Natural killer cell (primary cell): ENCODE measurements at regions of chr6 and their contacts with region 1.

Region 1: DNA sequence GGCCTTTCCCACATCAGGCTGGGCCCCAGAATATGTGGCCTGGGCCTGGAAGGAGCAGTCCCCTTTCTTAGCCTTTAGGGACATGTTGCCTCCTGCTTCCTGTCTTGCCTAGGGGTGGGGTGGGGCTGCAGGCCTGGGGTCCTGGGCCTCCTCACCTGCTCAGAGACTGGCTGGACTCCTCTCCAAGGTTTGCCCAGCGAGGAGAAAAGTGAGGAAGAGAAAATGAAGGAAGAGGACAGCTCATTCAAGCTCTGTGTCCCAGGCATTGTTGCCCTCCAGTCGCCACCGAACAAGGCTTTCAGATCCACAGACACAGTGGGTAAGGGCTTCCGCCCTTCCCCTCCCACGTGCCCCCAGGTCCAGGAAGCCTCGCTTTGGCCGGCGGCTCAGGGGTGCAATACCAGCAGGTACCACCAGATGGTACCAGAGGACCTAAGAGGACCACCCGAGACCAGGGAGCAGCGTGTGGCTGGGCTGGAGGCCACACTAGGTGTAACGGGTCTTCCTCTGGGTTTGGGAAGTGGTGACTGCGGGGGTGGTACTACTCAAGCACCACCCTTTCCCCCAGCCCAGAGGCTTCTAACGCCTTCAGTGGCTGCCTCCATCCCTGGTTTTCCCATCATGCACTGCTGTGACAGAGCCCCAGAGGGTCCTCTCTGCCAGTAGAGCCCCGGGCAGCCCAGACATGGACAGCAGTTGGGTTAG is 5.5 kb upstream of the BAK1 start:
- DNase-seq: peak; percentile 90 to 93
- ATAC-seq: peak; percentile 93 to 98 (median 97)
- H3K4me3 ChIP-seq: no peak overlapping the region
- H3K4me3 Mint-ChIP-seq: no peak overlapping the region
- H3K27ac ChIP-seq: peak overlapping the region; percentile 20
- H3K27ac Mint-ChIP-seq: peak overlapping the region; percentile 54 to 70
- H3K4me1 ChIP-seq: peaks cover 18% of the 10 kb centered on the region
- H3K4me1 Mint-ChIP-seq: peaks cover 0 to 12% of the 10 kb centered on the region in 2 donors
- H3K27me3 ChIP-seq: no peaks in the 10 kb centered on the region
- H3K27me3 Mint-ChIP-seq: no peaks in the 10 kb centered on the region
- CTCF ChIP-seq: peak; percentile 100

Region 2: DNA sequence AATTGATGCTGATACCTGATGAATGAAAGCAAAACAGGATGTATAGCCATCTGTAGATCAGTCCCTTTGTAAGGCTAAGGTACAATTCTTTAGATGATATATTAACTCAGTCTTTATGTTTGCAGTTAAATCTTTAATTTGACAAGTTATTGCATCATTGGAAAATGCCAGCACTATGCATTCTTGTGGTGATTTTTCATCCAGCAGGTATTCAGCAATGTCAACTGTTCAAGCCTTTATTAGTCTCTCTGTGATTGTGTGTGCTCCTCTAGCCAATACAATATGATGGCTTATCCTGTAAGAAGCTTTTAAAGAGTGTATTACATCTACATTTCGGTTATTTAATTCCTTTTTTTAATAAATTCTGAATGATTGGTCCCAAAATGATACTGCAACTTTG is 679.0 kb before region 1 on chr6:
- intact Hi-C with region 1: no loop called
- DNase-seq: no peak
- ATAC-seq: no peak
- H3K4me3 ChIP-seq: no peak overlapping the region
- H3K4me3 Mint-ChIP-seq: no peak overlapping the region
- H3K27ac ChIP-seq: no peak overlapping the region
- H3K27ac Mint-ChIP-seq: no peak overlapping the region
- H3K4me1 ChIP-seq: no peaks in the 10 kb centered on the region
- H3K4me1 Mint-ChIP-seq: no peaks in the 10 kb centered on the region
- H3K27me3 ChIP-seq: no peaks in the 10 kb centered on the region
- H3K27me3 Mint-ChIP-seq: peaks cover 0 to 4% of the 10 kb centered on the region in 2 donors
- CTCF ChIP-seq: no peak

Region 3: DNA sequence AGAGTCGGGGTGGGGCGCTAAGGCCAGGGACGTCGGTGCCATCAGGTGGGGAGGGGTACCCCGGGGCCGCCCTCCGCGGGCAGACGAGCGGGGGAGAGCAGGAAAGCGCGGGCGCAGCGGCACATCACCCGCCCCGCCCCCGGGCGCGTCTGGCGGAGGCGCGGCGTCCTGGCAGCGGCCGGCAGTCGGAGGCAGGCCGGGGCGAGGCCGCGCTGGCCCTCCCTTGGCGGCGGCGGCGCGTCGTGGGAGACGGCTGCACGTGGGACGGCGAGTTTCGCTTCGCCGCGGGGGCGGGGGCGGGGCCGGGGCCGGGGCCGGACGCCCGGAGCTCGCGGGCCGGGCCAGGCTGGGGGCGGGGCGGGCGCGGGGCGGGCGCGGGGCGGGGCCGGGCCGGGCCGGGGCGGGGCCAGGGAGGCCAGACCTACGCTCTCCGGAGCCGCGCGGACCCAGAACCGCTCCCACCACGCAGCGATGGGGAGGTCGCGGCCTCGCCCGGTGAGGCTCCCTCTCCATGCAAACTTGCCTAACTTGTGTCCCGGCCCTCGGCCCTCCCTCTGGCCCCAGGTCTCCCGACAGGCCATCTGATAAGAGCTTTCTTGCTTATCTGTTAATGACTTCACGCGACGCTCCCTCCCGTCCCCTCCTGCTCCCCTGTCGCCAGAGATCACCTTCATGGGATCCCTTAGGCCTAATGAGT is 48.1 kb after region 1 on chr6:
- intact Hi-C with region 1: loop called (anchors 1 kb)
- DNase-seq: peak; percentile 60 to 78
- ATAC-seq: peak; percentile 82 to 89 (median 86)
- H3K4me3 ChIP-seq: peak overlapping the region; percentile 48
- H3K4me3 Mint-ChIP-seq: peak overlapping the region; percentile 87
- H3K27ac ChIP-seq: peak overlapping the region; percentile 37
- H3K27ac Mint-ChIP-seq: peak overlapping the region; percentile 88 to 89
- H3K4me1 ChIP-seq: peaks cover 27% of the 10 kb centered on the region
- H3K4me1 Mint-ChIP-seq: peaks cover 53 to 60% of the 10 kb centered on the region in 2 donors
- H3K27me3 ChIP-seq: no peaks in the 10 kb centered on the region
- H3K27me3 Mint-ChIP-seq: no peaks in the 10 kb centered on the region
- CTCF ChIP-seq: no peak

Region 4: DNA sequence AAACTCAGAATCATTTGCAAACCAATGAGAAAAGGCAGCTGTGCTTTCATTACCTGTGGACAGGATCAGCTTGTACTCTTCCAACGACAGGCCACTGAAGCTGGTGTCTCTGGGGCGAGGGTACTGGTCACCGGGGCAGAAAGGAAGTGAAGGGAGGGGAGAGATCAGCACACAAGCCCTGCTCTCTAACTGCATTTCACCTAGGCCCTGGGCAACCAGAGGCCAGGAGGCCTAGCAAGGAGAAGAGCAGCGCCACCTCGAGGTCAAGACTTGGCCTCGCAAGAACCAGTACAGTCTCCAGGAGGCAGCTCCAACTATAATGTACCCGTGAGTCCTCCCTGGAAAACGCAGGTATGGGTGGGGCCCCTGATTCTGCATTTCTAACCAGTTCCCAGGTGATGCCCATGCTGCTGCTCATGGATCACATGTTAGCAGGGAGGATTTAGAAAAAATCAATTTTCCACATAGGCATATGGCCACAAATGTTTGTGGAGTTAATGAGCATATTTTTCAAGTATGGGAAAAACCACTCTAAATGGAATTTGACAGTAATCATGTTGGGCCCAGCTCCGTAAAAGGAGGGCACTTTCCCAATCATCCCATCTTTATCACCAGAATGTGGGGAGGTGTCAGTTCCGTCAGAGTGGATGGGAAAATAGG is 115.0 kb after region 1 on chr6:
- intact Hi-C with region 1: loop called (anchors 1 kb)
- DNase-seq: peak; percentile 61 to 88
- ATAC-seq: peak; percentile 79 to 97 (median 84)
- H3K4me3 ChIP-seq: no peak overlapping the region
- H3K4me3 Mint-ChIP-seq: no peak overlapping the region
- H3K27ac ChIP-seq: no peak overlapping the region
- H3K27ac Mint-ChIP-seq: peak overlapping the region; percentile 54 to 58
- H3K4me1 ChIP-seq: peaks cover 25% of the 10 kb centered on the region
- H3K4me1 Mint-ChIP-seq: peaks cover 0 to 12% of the 10 kb centered on the region in 2 donors
- H3K27me3 ChIP-seq: no peaks in the 10 kb centered on the region
- H3K27me3 Mint-ChIP-seq: no peaks in the 10 kb centered on the region
- CTCF ChIP-seq: peak; percentile 70

Region 5: GRCh38 chr6:33744001-33744848 is 158.7 kb after region 1 on chr6:
- intact Hi-C with region 1: loop called (anchors 1 kb)
- DNase-seq: peak; percentile 66 to 86
- ATAC-seq: peak; percentile 71 to 91 (median 86)
- H3K4me3 ChIP-seq: no peak overlapping the region
- H3K4me3 Mint-ChIP-seq: no peak overlapping the region
- H3K27ac ChIP-seq: no peak overlapping the region
- H3K27ac Mint-ChIP-seq: no peak overlapping the region
- H3K4me1 ChIP-seq: no peaks in the 10 kb centered on the region
- H3K4me1 Mint-ChIP-seq: peaks cover 5% of the 10 kb centered on the region in 2 donors
- H3K27me3 ChIP-seq: no peaks in the 10 kb centered on the region
- H3K27me3 Mint-ChIP-seq: peaks cover 7 to 12% of the 10 kb centered on the region in 2 donors
- CTCF ChIP-seq: peak; percentile 75